ENCODE measurements at regions of chr6 and their contacts with region 1.

Region 1: DNA sequence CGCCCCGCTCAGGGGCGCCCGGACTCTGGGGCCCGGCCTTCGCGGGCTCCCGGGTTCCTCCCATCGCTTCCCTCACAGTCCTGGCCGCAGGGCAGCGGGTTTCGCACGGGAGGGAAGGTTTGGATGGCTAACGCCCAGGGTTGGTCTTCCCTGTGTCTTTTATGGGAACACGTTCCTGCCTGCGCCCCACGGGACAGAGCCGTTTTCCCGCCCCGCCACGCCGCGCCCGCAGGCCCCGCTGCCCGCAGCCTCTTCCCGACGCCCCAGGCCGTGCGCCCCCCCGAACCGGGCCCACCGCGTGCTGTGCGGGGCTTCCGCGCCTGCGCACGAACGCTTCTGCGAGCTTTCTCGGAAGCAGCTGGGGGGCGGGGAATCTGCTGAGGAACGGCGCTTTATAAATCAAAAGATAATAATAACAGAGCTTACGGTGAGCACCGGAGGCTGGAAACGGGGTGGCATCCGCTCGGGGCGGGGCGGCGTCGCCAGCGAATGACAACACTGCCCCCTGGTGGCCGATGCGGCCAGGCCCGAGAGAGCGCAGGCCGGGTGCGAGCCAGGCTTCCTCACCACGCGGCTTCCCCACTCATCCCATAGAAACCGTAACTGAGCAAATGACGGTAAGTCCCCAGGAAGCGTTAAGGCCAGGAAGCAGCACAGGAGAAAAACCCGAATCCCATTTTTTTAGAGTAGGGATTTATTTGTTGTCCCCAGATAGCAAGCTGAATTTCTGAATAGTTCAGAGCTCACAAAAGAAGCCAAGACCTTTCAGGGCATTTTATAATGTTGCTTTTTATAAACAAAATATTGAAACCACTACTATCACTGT is 116.4 kb downstream of the MYLK4 start:
- DNase-seq: peak; percentile 95
- H3K4me3 Mint-ChIP-seq: peak overlapping the region; percentile 76
- H3K27ac Mint-ChIP-seq: no peak overlapping the region
- H3K4me1 Mint-ChIP-seq: peaks cover 5% of the 10 kb centered on the region
- H3K27me3 Mint-ChIP-seq: peaks cover 39% of the 10 kb centered on the region

Region 2: DNA sequence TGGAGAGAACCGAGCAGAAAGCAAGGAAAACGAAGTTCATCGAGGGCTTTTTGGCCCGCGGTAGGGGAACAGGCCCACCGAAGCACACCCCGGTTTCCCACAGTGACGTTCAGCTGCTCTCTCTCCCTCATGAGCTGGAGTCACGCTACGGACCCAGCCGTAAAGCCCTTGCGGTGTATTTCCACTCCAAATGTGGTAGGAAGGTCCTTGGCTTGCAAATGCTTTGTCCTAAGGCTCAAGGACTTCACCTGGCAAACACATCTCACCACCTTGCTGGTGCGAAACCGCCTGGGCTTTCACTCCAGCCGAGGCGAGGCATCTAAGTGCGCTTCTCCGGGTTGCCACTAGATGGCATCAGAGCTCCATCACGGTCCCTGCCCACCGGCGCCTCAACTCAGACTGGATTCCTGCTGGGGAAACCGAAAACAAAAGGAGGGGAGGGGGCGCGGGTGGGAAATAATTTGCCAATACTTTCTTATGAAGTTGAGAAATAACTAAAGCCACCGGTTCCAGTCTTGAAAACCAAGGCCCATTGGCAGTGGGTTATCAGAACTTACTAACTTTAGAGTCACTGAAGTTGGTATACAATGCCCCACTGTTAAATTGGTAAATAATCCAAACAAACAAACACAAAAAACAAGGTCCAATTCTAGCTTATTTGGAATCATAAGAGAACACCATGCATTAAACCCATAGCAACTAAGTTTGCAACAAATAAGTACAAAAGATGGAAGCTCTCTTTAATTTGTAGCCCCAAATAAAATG is 1038.1 kb before region 1 on chr6:
- intact Hi-C with region 1: loop called (anchors 1 kb)
- DNase-seq: peak; percentile 89
- H3K4me3 Mint-ChIP-seq: no peak overlapping the region
- H3K27ac Mint-ChIP-seq: no peak overlapping the region
- H3K4me1 Mint-ChIP-seq: peaks cover 3% of the 10 kb centered on the region
- H3K27me3 Mint-ChIP-seq: peaks cover 55% of the 10 kb centered on the region

Region 3: GRCh38 chr6:1604158-1605030 is 1030.0 kb before region 1 on chr6:
- intact Hi-C with region 1: loop called (anchors 1 kb)
- DNase-seq: peak; percentile 90
- H3K4me3 Mint-ChIP-seq: no peak overlapping the region
- H3K27ac Mint-ChIP-seq: no peak overlapping the region
- H3K4me1 Mint-ChIP-seq: peaks cover 13% of the 10 kb centered on the region
- H3K27me3 Mint-ChIP-seq: peaks cover 81% of the 10 kb centered on the region

Region 4: GRCh38 chr6:2196079-2196679 is 438.2 kb before region 1 on chr6:
- intact Hi-C with region 1: loop called (anchors 10 kb)
- DNase-seq: peak; percentile 80
- H3K4me3 Mint-ChIP-seq: no peak overlapping the region
- H3K27ac Mint-ChIP-seq: no peak overlapping the region
- H3K4me1 Mint-ChIP-seq: peaks cover 2% of the 10 kb centered on the region
- H3K27me3 Mint-ChIP-seq: peaks cover 3% of the 10 kb centered on the region

Region 5: DNA sequence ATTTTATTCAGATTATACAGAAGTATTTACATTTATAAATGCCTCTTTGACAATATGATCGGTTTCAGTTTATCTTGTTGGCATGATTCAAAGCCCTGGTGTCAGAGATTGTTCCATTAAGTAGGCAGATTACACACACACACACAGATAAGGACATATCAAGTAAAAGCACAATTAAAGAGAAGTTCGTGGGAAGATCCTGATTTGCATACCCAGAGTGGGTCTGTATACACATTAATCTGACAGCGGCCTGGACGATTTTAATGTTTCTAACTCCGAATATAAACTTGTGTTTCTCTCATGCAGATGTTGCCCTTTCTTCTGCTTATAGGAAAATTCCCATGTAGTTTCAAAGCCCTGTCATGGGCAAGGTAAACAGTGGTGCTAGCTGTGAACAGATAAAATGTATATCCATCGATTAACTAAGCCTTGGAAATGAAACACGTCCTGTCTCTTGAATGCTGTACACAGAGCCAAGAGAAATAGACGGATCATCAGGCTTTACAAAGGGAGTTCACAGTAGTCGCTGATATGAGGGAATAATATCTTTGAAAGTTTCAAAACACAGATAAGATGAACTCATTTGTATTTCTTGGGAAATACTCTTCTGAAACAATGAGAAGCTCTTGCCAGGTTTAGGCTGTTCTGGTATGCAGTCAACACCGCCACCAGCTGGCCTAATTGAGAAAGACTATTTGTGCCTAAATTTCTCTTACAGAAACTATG is 280.8 kb before region 1 on chr6:
- intact Hi-C with region 1: loop called (anchors 2 kb)
- DNase-seq: peak; percentile 84
- H3K4me3 Mint-ChIP-seq: no peak overlapping the region
- H3K27ac Mint-ChIP-seq: no peak overlapping the region
- H3K4me1 Mint-ChIP-seq: no peaks in the 10 kb centered on the region
- H3K27me3 Mint-ChIP-seq: peaks cover 9% of the 10 kb centered on the region

Region 6: GRCh38 chr6:2448820-2449571 is 185.4 kb before region 1 on chr6:
- intact Hi-C with region 1: loop called (anchors 2 kb)
- DNase-seq: peak; percentile 70
- H3K4me3 Mint-ChIP-seq: peak overlapping the region; percentile 31
- H3K27ac Mint-ChIP-seq: no peak overlapping the region
- H3K4me1 Mint-ChIP-seq: peaks cover 3% of the 10 kb centered on the region
- H3K27me3 Mint-ChIP-seq: peaks cover 18% of the 10 kb centered on the region